ENCODE measurements at regions of chr4 and their contacts with region 1.

Region 1: DNA sequence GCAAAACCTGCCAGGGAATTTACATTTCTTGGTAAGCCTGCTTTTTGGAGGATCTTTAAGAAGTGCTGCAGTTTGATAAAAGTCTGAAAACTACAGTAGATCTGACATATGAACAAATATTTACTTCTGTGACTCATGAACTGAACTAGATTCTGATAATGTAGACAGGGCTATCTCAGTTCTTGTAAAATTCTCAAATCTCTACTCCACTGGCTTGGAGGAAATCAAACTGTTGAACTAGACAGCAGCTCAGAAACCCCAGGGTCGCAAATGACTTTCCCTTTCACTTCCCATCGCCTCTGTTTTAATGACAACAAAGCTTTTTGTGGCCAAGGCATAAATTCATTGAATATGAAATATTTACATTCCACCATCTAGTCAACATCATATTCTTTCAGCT is 15.4 kb upstream of the OCIAD1 start:
- DNase-seq: no peak
- H3K4me3 ChIP-seq: no peak overlapping the region
- H3K4me3 Mint-ChIP-seq: no peak overlapping the region
- H3K27ac Mint-ChIP-seq: no peak overlapping the region
- H3K4me1 ChIP-seq: peaks cover 11% of the 10 kb centered on the region
- H3K4me1 Mint-ChIP-seq: peaks cover 20% of the 10 kb centered on the region
- H3K27me3 ChIP-seq: no peaks in the 10 kb centered on the region
- H3K27me3 Mint-ChIP-seq: no peaks in the 10 kb centered on the region
- CTCF ChIP-seq: no peak

Region 2: DNA sequence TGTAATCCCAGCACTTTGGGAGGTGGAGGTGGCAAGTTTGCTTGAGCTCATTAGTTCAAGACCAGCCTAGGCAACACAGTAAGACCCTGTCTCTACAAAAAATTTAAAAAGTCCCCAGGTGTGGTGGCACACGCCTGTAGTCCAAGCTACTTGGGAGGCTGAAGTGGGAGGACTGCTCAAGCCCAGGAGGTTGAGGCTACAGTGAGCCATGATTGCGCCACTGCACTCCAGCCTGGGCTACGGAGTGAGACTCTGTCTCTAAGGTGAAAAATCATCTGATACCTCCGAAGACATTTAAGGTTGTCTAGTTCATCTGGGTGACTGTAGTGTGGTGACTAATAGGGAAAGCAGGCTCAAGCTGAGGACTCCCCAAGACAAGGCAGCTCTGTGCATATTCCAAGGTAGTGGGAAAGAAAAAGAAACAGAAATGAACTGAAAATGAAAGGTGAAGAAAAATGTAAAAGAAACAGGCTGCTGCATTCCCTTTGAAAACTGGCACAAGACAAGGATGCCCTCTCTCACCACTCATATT is 58.7 kb before region 1 on chr4:
- CTCF ChIA-PET with region 1: no interaction called
- POLR2A ChIA-PET with region 1: no interaction called
- intact Hi-C with region 1: no loop called
- DNase-seq: no peak
- H3K4me3 ChIP-seq: no peak overlapping the region
- H3K4me3 Mint-ChIP-seq: no peak overlapping the region
- H3K27ac Mint-ChIP-seq: no peak overlapping the region
- H3K4me1 ChIP-seq: peaks cover 7% of the 10 kb centered on the region; the same call in 1 of the 2 replicates
- H3K4me1 Mint-ChIP-seq: no peaks in the 10 kb centered on the region
- H3K27me3 ChIP-seq: no peaks in the 10 kb centered on the region
- H3K27me3 Mint-ChIP-seq: no peaks in the 10 kb centered on the region
- CTCF ChIP-seq: no peak

Region 3: GRCh38 chr4:48830706-48831531 is 15.4 kb after region 1 on chr4 and contains the start of gene OCIAD1:
- CTCF ChIA-PET with region 1: no interaction called
- POLR2A ChIA-PET with region 1: no interaction called
- intact Hi-C with region 1: loop called (anchors 1 kb)
- DNase-seq: peak; percentile 96 to 98
- H3K4me3 ChIP-seq: peak within 1 kb of the TSS; percentile 97
- H3K4me3 Mint-ChIP-seq: peak within 1 kb of the TSS; percentile 98
- H3K27ac Mint-ChIP-seq: peak within 1 kb of the TSS; percentile 99
- H3K4me1 ChIP-seq: no peaks in the 10 kb centered on the region
- H3K4me1 Mint-ChIP-seq: peaks cover 8% of the 10 kb centered on the region
- H3K27me3 ChIP-seq: no peaks in the 10 kb centered on the region
- H3K27me3 Mint-ChIP-seq: no peaks in the 10 kb centered on the region
- CTCF ChIP-seq: no peak
- total RNA-seq, gene OCIAD1: 121 and 133 TPM in 2 replicates

Measured in Caco-2 (cell line).